ENCODE measurements at regions of chr1 and their contacts with region 1.

Region 1: GRCh38 chr1:17494114-17494729 is 45.3 kb upstream of the ARHGEF10L start:
- DNase-seq: peak; percentile 5 to 64 (median 44)
- ATAC-seq: peak; percentile 78
- H3K4me3 ChIP-seq: no peak overlapping the region
- H3K4me3 Mint-ChIP-seq: no peak overlapping the region
- H3K27ac ChIP-seq: no peak overlapping the region
- H3K27ac Mint-ChIP-seq: no peak overlapping the region
- H3K4me1 ChIP-seq: no peaks in the 10 kb centered on the region
- H3K4me1 Mint-ChIP-seq: no peaks in the 10 kb centered on the region
- H3K27me3 ChIP-seq: no peaks in the 10 kb centered on the region
- H3K27me3 Mint-ChIP-seq: peaks cover 0 to 8% (median 5%) of the 10 kb centered on the region in 5 donors

Region 2: GRCh38 chr1:18575620-18576019 is 1081.4 kb after region 1 on chr1:
- CTCF ChIA-PET with region 1: interaction called, 3 read pairs
- POLR2A ChIA-PET with region 1: no interaction called
- intact Hi-C with region 1: loop called in 1 of 2 experiments (anchors 2 kb)
- DNase-seq: peak in 6 of 9 donors; percentile 18 to 67 (median 34)
- ATAC-seq: no peak
- H3K4me3 ChIP-seq: no peak overlapping the region
- H3K4me3 Mint-ChIP-seq: no peak overlapping the region
- H3K27ac ChIP-seq: no peak overlapping the region
- H3K27ac Mint-ChIP-seq: no peak overlapping the region
- H3K4me1 ChIP-seq: no peaks in the 10 kb centered on the region
- H3K4me1 Mint-ChIP-seq: no peaks in the 10 kb centered on the region
- H3K27me3 ChIP-seq: no peaks in the 10 kb centered on the region
- H3K27me3 Mint-ChIP-seq: peaks cover 0 to 24% (median 16%) of the 10 kb centered on the region in 5 donors

Measured in naive thymus-derived CD4-positive, alpha-beta T cell (primary cell).